Activated CD4-positive, alpha-beta memory T cell treated with anti-CD3 and anti-CD28 coated beads, Interleukin-2, amount 10 ng/mL, durations not matched to agents 7 days and 5 days (primary cell): ENCODE measurements at regions of chr2 and their contacts with region 1.

Region 1: DNA sequence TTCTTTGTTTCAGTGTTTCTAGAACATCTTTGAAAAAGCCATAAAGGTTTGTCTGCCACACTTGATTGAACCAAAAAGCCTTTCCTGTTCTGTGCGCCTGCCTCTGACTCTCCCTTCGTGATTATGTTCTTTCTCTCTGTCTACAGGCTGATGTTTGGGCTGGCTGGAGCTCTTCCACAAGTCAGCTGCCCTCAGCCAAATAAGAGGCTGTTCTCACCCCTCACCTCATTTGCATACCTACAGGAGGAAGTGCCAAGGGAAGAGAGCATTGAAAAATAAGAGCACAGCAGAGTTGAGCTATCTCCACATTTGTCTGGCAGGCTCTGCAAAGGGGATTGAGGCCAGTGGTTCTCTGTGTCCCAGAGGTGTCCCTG is 15.8 kb downstream of the INPP5D start:
- DNase-seq: peak; percentile 52
- H3K4me3 Mint-ChIP-seq: no peak overlapping the region
- H3K27ac Mint-ChIP-seq: no peak overlapping the region
- H3K4me1 Mint-ChIP-seq: peaks cover 48% of the 10 kb centered on the region
- H3K27me3 Mint-ChIP-seq: no peaks in the 10 kb centered on the region

Region 2: DNA sequence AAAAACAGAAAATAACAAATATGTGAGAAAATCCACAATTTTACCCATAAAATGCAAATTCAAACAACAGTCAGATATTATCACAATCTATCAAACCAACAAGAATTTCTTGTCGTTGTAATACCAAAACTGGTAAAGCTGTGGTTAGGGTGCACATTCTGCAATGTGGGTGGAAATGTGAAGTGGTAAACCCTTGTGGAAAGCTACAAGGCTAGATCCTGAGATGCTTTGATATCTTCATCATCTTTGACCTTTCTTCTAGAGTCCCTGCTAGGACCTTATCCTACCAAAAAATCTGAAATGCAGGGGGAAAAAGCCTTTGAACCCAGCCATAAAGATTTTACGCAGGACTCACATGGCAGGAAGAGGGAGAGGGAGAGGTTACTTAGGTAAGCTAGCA is 158.3 kb after region 1 on chr2:
- CTCF ChIA-PET with region 1: interaction called, 3 read pairs
- POLR2A ChIA-PET with region 1: interaction called, 13 read pairs
- DNase-seq: peak; percentile 52
- H3K4me3 Mint-ChIP-seq: peak overlapping the region; percentile 22
- H3K27ac Mint-ChIP-seq: peak overlapping the region; percentile 91
- H3K4me1 Mint-ChIP-seq: peaks cover 84% of the 10 kb centered on the region
- H3K27me3 Mint-ChIP-seq: no peaks in the 10 kb centered on the region